ENCODE measurements at regions of chr6 and their contacts with region 1.

Region 1: GRCh38 chr6:144013486-144013909 is 5.4 kb upstream of the PLAGL1 start:
- DNase-seq: peak; percentile 50 to 61 (median 56)
- H3K4me3 ChIP-seq: no peak overlapping the region
- H3K4me3 Mint-ChIP-seq: no peak overlapping the region
- H3K27ac ChIP-seq: no peak overlapping the region
- H3K27ac Mint-ChIP-seq: no peak overlapping the region
- H3K4me1 ChIP-seq: no peaks in the 10 kb centered on the region
- H3K4me1 Mint-ChIP-seq: peaks cover 0 to 2% (median under 1%) of the 10 kb centered on the region in 4 donors
- H3K27me3 ChIP-seq: no peaks in the 10 kb centered on the region
- H3K27me3 Mint-ChIP-seq: peaks cover 1 to 4% of the 10 kb centered on the region in 2 donors

Region 2: GRCh38 chr6:142474531-142475289 is 1538.8 kb before region 1 on chr6:
- CTCF ChIA-PET with region 1: interaction called, 14 read pairs
- POLR2A ChIA-PET with region 1: no interaction called
- intact Hi-C with region 1: no loop called
- DNase-seq: peak in 4 of 5 donors; percentile 33 to 42 (median 40)
- H3K4me3 ChIP-seq: no peak overlapping the region
- H3K4me3 Mint-ChIP-seq: no peak overlapping the region
- H3K27ac ChIP-seq: no peak overlapping the region
- H3K27ac Mint-ChIP-seq: no peak overlapping the region
- H3K4me1 ChIP-seq: no peaks in the 10 kb centered on the region
- H3K4me1 Mint-ChIP-seq: peaks cover 0 to 5% (median 2%) of the 10 kb centered on the region in 4 donors
- H3K27me3 ChIP-seq: no peaks in the 10 kb centered on the region
- H3K27me3 Mint-ChIP-seq: no peaks in the 10 kb centered on the region

Region 3: GRCh38 chr6:142952614-142953013 is 1060.9 kb before region 1 on chr6:
- CTCF ChIA-PET with region 1: no interaction called
- POLR2A ChIA-PET with region 1: no interaction called
- intact Hi-C with region 1: loop called (anchors 5 kb)
- DNase-seq: no peak
- H3K4me3 ChIP-seq: no peak overlapping the region
- H3K4me3 Mint-ChIP-seq: no peak overlapping the region
- H3K27ac ChIP-seq: no peak overlapping the region
- H3K27ac Mint-ChIP-seq: peak overlapping the region; percentile 3 to 86 (median 57)
- H3K4me1 ChIP-seq: peaks cover 6% of the 10 kb centered on the region
- H3K4me1 Mint-ChIP-seq: peaks cover 13 to 20% (median 16%) of the 10 kb centered on the region in 4 donors
- H3K27me3 ChIP-seq: no peaks in the 10 kb centered on the region
- H3K27me3 Mint-ChIP-seq: no peaks in the 10 kb centered on the region

Region 4: GRCh38 chr6:143575440-143575839 is 438.1 kb before region 1 on chr6:
- CTCF ChIA-PET with region 1: interaction called, 86 read pairs
- POLR2A ChIA-PET with region 1: interaction called, 5 read pairs
- intact Hi-C with region 1: loop called (anchors 1 kb)
- DNase-seq: peak; percentile 54 to 72 (median 68)
- H3K4me3 ChIP-seq: no peak overlapping the region
- H3K4me3 Mint-ChIP-seq: no peak overlapping the region
- H3K27ac ChIP-seq: no peak overlapping the region
- H3K27ac Mint-ChIP-seq: peak overlapping the region in 4 of 7 donors; percentile 22 to 43 (median 32)
- H3K4me1 ChIP-seq: no peaks in the 10 kb centered on the region
- H3K4me1 Mint-ChIP-seq: peaks cover 11 to 35% (median 19%) of the 10 kb centered on the region in 4 donors
- H3K27me3 ChIP-seq: no peaks in the 10 kb centered on the region
- H3K27me3 Mint-ChIP-seq: no peaks in the 10 kb centered on the region

Region 5: DNA sequence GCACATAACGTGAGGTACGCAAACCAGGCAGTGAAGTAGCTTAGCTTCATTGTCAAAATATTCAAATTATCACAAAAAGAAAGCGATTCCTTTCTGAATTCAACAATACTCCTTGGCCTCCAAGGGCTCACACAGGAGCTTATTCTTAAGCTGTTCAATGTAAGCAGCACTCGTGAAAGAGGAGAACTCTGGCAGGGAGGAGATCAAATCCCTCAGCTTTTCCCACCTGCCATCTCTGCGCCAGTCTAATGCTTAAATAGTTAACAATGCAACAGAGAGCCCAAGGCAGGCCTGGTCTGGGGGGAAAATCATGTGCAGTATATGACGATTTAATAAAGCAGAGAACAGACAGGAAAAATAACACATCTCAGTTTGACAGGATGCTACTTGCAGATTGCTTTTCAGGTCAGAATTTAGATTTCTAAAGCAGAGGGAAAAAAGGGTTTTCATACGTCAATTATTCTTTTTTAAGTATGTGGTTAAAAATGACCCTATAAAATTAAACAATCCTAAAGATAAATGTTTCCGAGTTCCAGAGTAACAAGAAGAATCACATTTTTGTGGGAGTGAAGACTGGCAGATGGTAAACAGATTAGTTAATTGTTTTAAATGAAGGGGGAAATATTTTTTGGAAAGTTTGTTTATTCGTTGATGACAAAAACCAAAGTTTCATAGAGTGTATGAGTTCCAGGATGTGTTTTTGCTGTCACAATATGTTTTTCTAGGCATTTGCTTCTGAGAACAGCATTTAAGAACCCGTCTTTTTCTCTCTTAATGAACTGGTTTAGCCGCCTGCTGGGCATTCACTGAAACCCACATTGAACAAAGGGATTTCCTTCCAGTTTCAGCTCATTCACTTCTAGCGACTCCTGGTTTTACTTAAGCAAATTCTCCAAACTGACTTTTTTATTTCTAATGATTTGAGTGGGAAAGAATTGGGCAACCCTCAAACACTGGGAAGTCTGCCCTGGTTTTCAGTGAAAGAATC is 51.3 kb before region 1 on chr6:
- CTCF ChIA-PET with region 1: no interaction called
- POLR2A ChIA-PET with region 1: no interaction called
- intact Hi-C with region 1: no loop called
- DNase-seq: no peak
- H3K4me3 ChIP-seq: no peak overlapping the region
- H3K4me3 Mint-ChIP-seq: no peak overlapping the region
- H3K27ac ChIP-seq: no peak overlapping the region
- H3K27ac Mint-ChIP-seq: no peak overlapping the region
- H3K4me1 ChIP-seq: no peaks in the 10 kb centered on the region
- H3K4me1 Mint-ChIP-seq: no peaks in the 10 kb centered on the region
- H3K27me3 ChIP-seq: no peaks in the 10 kb centered on the region
- H3K27me3 Mint-ChIP-seq: no peaks in the 10 kb centered on the region

Region 6: GRCh38 chr6:143999406-143999805 is 14.1 kb before region 1 on chr6:
- CTCF ChIA-PET with region 1: interaction called, 13 read pairs
- POLR2A ChIA-PET with region 1: no interaction called
- intact Hi-C with region 1: no loop called
- DNase-seq: no peak
- H3K4me3 ChIP-seq: no peak overlapping the region
- H3K4me3 Mint-ChIP-seq: no peak overlapping the region
- H3K27ac ChIP-seq: no peak overlapping the region
- H3K27ac Mint-ChIP-seq: no peak overlapping the region
- H3K4me1 ChIP-seq: no peaks in the 10 kb centered on the region
- H3K4me1 Mint-ChIP-seq: no peaks in the 10 kb centered on the region
- H3K27me3 ChIP-seq: no peaks in the 10 kb centered on the region
- H3K27me3 Mint-ChIP-seq: peaks cover 4% of the 10 kb centered on the region in 2 donors

Region 7: GRCh38 chr6:144055121-144055931 is 41.8 kb after region 1 on chr6:
- CTCF ChIA-PET with region 1: interaction called, 12 read pairs
- POLR2A ChIA-PET with region 1: no interaction called
- intact Hi-C with region 1: loop called (anchors 10 kb)
- DNase-seq: peak; percentile 61 to 77 (median 72)
- H3K4me3 ChIP-seq: peak overlapping the region in 1 of 2 donors; percentile 46
- H3K4me3 Mint-ChIP-seq: peak overlapping the region; percentile 77 to 95 (median 89)
- H3K27ac ChIP-seq: peak overlapping the region; percentile 54
- H3K27ac Mint-ChIP-seq: peak overlapping the region; percentile 79 to 98 (median 96)
- H3K4me1 ChIP-seq: peaks cover 33% of the 10 kb centered on the region
- H3K4me1 Mint-ChIP-seq: peaks cover 28 to 39% (median 33%) of the 10 kb centered on the region in 4 donors
- H3K27me3 ChIP-seq: no peaks in the 10 kb centered on the region
- H3K27me3 Mint-ChIP-seq: no peaks in the 10 kb centered on the region